CD8-positive, alpha-beta memory T cell (primary cell): ENCODE measurements at regions of chr17 and their contacts with region 1.

Region 1: DNA sequence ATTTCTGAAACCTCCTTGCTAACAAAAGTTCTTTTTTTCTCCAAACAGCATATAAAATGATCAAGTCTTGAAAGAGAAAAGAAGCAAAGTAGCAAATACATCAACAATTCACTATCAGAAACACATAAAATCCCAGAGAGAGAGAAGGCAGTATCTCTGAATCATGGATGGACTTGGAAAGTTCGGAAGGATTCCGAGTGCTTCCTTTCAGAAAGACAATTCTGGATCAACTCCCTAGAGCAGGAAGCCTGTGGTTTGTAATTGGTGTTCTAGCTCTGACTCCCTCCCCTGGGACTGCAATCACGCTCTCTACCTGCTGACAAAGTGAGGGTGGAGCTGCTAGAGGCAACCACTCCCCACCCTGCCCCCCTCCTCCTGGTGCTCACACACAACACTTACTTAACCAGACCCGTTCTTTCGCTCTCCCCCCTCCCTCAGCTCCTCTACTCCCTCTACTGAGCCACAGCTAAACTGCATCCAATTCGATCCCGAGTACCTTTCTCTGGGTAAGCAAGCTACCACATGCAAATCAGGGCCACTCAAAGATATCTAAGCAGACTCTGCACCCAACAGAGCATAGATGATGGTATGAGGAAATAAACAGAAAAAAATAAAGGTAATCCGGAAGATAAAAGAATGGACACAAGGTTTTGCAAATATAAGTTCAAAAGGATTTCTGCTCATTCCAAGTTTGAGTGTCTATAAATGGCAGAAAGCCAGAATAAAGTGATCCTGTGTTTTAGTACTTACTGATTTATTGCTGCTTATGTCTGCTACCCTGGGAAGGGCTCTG is at the start of gene RNF43:
- DNase-seq: peak; percentile 72 to 93 (median 85)
- H3K4me3 ChIP-seq: peak within 1 kb of the TSS; percentile 15
- H3K4me3 Mint-ChIP-seq: peak within 1 kb of the TSS in 5 of 7 donors; percentile 0 to 37 (median 2)
- H3K27ac ChIP-seq: peak within 1 kb of the TSS; percentile 28
- H3K27ac Mint-ChIP-seq: peak within 1 kb of the TSS; percentile 0 to 88 (median 55)
- H3K4me1 ChIP-seq: peaks cover 15% of the 10 kb centered on the region
- H3K4me1 Mint-ChIP-seq: peaks cover 9 to 19% (median 14%) of the 10 kb centered on the region in 3 donors
- H3K27me3 ChIP-seq: no peaks in the 10 kb centered on the region
- H3K27me3 Mint-ChIP-seq: no peaks in the 10 kb centered on the region
- total RNA-seq, gene RNF43: 0.47 to 1.2 TPM

Region 2: GRCh38 chr17:58303971-58304725 is 113.3 kb before region 1 on chr17:
- CTCF ChIA-PET with region 1: interaction called, 20 read pairs
- POLR2A ChIA-PET with region 1: no interaction called
- DNase-seq: peak; percentile 34 to 70 (median 52)
- H3K4me3 ChIP-seq: no peak overlapping the region
- H3K4me3 Mint-ChIP-seq: peak overlapping the region in 1 of 7 donors; percentile 72
- H3K27ac ChIP-seq: no peak overlapping the region
- H3K27ac Mint-ChIP-seq: peak overlapping the region in 5 of 8 donors; percentile 2 to 70 (median 42)
- H3K4me1 ChIP-seq: no peaks in the 10 kb centered on the region
- H3K4me1 Mint-ChIP-seq: peaks cover 5 to 13% (median 6%) of the 10 kb centered on the region in 3 donors
- H3K27me3 ChIP-seq: no peaks in the 10 kb centered on the region
- H3K27me3 Mint-ChIP-seq: no peaks in the 10 kb centered on the region

Region 3: GRCh38 chr17:58329035-58329809 is 88.3 kb before region 1 on chr17:
- CTCF ChIA-PET with region 1: interaction called, 19 read pairs
- POLR2A ChIA-PET with region 1: interaction called, 10 read pairs
- DNase-seq: peak; percentile 48 to 78 (median 72)
- H3K4me3 ChIP-seq: peak overlapping the region; percentile 98
- H3K4me3 Mint-ChIP-seq: peak overlapping the region; percentile 89 to 100 (median 95)
- H3K27ac ChIP-seq: peak overlapping the region; percentile 96
- H3K27ac Mint-ChIP-seq: peak overlapping the region; percentile 90 to 99 (median 98)
- H3K4me1 ChIP-seq: peaks cover 43% of the 10 kb centered on the region
- H3K4me1 Mint-ChIP-seq: peaks cover 48 to 64% (median 55%) of the 10 kb centered on the region in 3 donors
- H3K27me3 ChIP-seq: no peaks in the 10 kb centered on the region
- H3K27me3 Mint-ChIP-seq: peaks cover 0 to 6% of the 10 kb centered on the region in 2 donors

Region 4: GRCh38 chr17:58387834-58388233 is 29.7 kb before region 1 on chr17:
- CTCF ChIA-PET with region 1: no interaction called
- POLR2A ChIA-PET with region 1: no interaction called
- DNase-seq: peak in 2 of 5 donors; percentile 10 to 27
- H3K4me3 ChIP-seq: no peak overlapping the region
- H3K4me3 Mint-ChIP-seq: peak overlapping the region in 1 of 7 donors; percentile 71
- H3K27ac ChIP-seq: peak overlapping the region; percentile 13
- H3K27ac Mint-ChIP-seq: peak overlapping the region in 7 of 8 donors; percentile 47 to 98 (median 74)
- H3K4me1 ChIP-seq: peaks cover 3% of the 10 kb centered on the region
- H3K4me1 Mint-ChIP-seq: peaks cover 6 to 37% (median 10%) of the 10 kb centered on the region in 3 donors
- H3K27me3 ChIP-seq: no peaks in the 10 kb centered on the region
- H3K27me3 Mint-ChIP-seq: no peaks in the 10 kb centered on the region

Region 5: DNA sequence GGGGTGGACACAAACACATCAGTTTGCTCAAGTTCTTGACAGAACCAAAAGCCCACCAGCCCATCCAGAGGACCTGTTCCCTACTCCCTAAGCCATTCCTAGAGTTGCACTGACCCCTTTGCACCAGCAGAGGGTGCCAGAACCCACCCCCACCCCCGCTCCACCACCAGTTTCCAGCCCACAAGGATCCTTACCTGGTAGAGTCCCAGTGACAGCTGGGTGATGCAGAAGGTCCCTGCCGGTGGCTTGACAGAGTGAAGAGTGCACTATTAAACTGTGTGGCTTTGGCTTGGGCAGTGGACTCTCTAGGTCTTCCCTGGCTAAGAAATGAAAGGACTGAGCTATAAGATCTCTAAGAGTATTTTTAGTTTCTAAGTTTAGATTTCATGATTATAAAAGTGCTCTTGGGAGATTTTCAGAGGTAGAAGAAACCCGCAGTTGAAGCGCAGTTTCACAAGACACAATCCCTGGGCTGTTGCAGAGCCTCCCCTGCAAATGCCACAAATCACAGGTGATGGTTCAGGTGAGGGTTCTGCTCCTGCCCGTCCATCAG is 170.3 kb after region 1 on chr17:
- CTCF ChIA-PET with region 1: no interaction called
- POLR2A ChIA-PET with region 1: no interaction called
- DNase-seq: peak; percentile 32 to 70 (median 36)
- H3K4me3 ChIP-seq: no peak overlapping the region
- H3K4me3 Mint-ChIP-seq: peak overlapping the region in 1 of 7 donors; percentile 41
- H3K27ac ChIP-seq: no peak overlapping the region
- H3K27ac Mint-ChIP-seq: peak overlapping the region in 2 of 8 donors; percentile 23 to 24
- H3K4me1 ChIP-seq: no peaks in the 10 kb centered on the region
- H3K4me1 Mint-ChIP-seq: peaks cover 0 to 5% (median 4%) of the 10 kb centered on the region in 3 donors
- H3K27me3 ChIP-seq: no peaks in the 10 kb centered on the region
- H3K27me3 Mint-ChIP-seq: peaks cover 0 to 11% of the 10 kb centered on the region in 2 donors

Region 6: DNA sequence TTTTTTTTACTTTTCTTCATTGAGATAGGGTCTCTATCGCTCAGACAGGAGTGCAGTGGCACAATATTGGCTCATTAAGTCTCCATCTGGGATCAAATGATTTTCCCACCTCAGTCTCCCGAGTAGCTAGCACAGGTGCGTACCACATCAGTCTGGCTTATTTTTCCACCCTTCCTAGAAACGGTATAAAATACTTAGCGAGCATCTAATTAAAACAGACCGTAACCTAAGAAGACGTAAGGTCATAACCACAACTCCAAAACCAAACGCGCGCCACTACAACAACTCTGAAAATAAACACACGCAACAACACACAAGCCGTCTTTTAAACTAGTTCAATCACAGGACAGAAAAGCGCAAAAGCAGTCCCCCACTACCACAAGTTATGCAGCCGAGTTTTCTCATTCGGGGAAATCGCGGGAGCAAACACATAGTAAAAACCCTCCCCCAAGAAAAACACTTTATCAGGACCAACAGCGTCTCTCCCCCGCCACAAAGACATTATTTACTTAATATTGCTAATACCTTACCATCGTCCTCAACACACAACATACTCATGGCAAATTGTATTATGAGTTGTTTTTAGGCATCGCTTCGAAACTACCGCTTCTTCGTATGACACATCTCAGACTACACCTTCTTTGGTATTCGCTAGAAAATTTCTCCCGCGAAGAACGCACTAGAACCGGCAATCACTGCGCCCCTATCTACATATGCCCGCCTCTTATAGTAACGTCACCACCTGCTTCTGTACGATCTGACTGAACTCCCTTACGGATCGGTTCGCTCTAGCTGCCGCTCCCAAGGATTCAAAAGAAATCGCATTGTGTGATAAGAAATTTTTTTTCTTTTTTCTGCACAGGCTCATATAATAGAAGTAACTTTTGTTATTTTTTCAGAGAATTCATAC is 241.6 kb after region 1 on chr17:
- CTCF ChIA-PET with region 1: no interaction called
- POLR2A ChIA-PET with region 1: no interaction called
- DNase-seq: peak; percentile 52 to 88 (median 85)
- H3K4me3 ChIP-seq: peak overlapping the region; percentile 63
- H3K4me3 Mint-ChIP-seq: peak overlapping the region; percentile 81 to 91 (median 86)
- H3K27ac ChIP-seq: peak overlapping the region; percentile 98
- H3K27ac Mint-ChIP-seq: peak overlapping the region; percentile 92 to 100 (median 100)
- H3K4me1 ChIP-seq: peaks cover 3% of the 10 kb centered on the region
- H3K4me1 Mint-ChIP-seq: peaks cover 16 to 23% (median 23%) of the 10 kb centered on the region in 3 donors
- H3K27me3 ChIP-seq: no peaks in the 10 kb centered on the region
- H3K27me3 Mint-ChIP-seq: peaks cover 0 to 7% of the 10 kb centered on the region in 2 donors